ENCODE measurements at regions of chr12 and their contacts with region 1.

Region 1: GRCh38 chr12:121550974-121551634 is 29.7 kb downstream of the KDM2B start:
- DNase-seq: no peak
- H3K4me3 Mint-ChIP-seq: no peak overlapping the region
- H3K27ac Mint-ChIP-seq: no peak overlapping the region
- H3K4me1 Mint-ChIP-seq: peaks cover 4% of the 10 kb centered on the region
- H3K27me3 Mint-ChIP-seq: no peaks in the 10 kb centered on the region

Region 2: GRCh38 chr12:121190523-121191031 is 360.5 kb before region 1 on chr12:
- CTCF ChIA-PET with region 1: no interaction called
- intact Hi-C with region 1: no loop called
- DNase-seq: no peak
- H3K4me3 Mint-ChIP-seq: no peak overlapping the region
- H3K27ac Mint-ChIP-seq: no peak overlapping the region
- H3K4me1 Mint-ChIP-seq: peaks cover 7% of the 10 kb centered on the region
- H3K27me3 Mint-ChIP-seq: no peaks in the 10 kb centered on the region

Region 3: GRCh38 chr12:121499929-121500793 is 50.9 kb before region 1 on chr12:
- CTCF ChIA-PET with region 1: interaction called, 11 read pairs
- intact Hi-C with region 1: no loop called
- DNase-seq: peak; percentile 83
- H3K4me3 Mint-ChIP-seq: no peak overlapping the region
- H3K27ac Mint-ChIP-seq: no peak overlapping the region
- H3K4me1 Mint-ChIP-seq: peaks cover 9% of the 10 kb centered on the region
- H3K27me3 Mint-ChIP-seq: no peaks in the 10 kb centered on the region

Region 4: GRCh38 chr12:121568971-121569751 is 18.1 kb after region 1 on chr12:
- CTCF ChIA-PET with region 1: interaction called, 7 read pairs
- intact Hi-C with region 1: loop called (anchors 1 kb)
- DNase-seq: no peak
- H3K4me3 Mint-ChIP-seq: no peak overlapping the region
- H3K27ac Mint-ChIP-seq: no peak overlapping the region
- H3K4me1 Mint-ChIP-seq: no peaks in the 10 kb centered on the region
- H3K27me3 Mint-ChIP-seq: no peaks in the 10 kb centered on the region

Region 5: DNA sequence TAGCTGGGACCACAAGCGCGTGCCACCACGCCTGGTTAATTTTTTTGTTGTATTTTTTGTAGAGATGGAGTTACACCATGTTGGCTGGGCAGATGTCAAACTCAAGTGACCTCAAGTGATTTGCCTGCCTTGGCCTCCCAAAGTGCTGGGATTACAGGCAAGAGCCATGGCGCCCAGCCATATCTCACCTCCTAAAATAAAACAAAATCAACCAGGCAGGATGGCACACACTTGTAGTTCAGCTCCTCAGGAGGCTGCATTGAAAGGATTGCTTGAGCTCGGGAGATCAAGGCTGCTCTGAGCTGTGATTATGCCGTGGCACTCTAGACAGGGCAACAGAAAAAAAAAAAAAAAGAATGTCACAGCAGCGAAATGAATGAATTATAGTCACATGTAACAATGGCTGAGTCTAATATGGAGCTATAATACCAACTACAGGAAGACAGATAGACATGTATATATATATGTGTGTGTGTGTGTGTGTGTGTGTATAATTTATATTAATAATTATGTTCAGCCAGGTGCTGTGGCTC is 142.1 kb after region 1 on chr12:
- CTCF ChIA-PET with region 1: no interaction called
- intact Hi-C with region 1: no loop called
- DNase-seq: no peak
- H3K4me3 Mint-ChIP-seq: no peak overlapping the region
- H3K27ac Mint-ChIP-seq: no peak overlapping the region
- H3K4me1 Mint-ChIP-seq: peaks cover 2% of the 10 kb centered on the region
- H3K27me3 Mint-ChIP-seq: no peaks in the 10 kb centered on the region

Measured in activated naive CD4-positive, alpha-beta T cell treated with anti-CD3 and anti-CD28 coated beads for 36 hours (primary cell).